ENCODE measurements at regions of chr1 and their contacts with region 1.

Region 1: GRCh38 chr1:63674238-63674864 is 81.1 kb downstream of the PGM1 start:
- DNase-seq: peak; percentile 83 to 89
- H3K4me3 ChIP-seq: no peak overlapping the region
- H3K4me3 Mint-ChIP-seq: no peak overlapping the region
- H3K27ac Mint-ChIP-seq: peak overlapping the region; percentile 19
- H3K4me1 ChIP-seq: peaks cover 9% of the 10 kb centered on the region
- H3K4me1 Mint-ChIP-seq: peaks cover 16% of the 10 kb centered on the region
- H3K27me3 ChIP-seq: no peaks in the 10 kb centered on the region
- H3K27me3 Mint-ChIP-seq: no peaks in the 10 kb centered on the region
- CTCF ChIP-seq: peak; percentile 38 to 56

Region 2: DNA sequence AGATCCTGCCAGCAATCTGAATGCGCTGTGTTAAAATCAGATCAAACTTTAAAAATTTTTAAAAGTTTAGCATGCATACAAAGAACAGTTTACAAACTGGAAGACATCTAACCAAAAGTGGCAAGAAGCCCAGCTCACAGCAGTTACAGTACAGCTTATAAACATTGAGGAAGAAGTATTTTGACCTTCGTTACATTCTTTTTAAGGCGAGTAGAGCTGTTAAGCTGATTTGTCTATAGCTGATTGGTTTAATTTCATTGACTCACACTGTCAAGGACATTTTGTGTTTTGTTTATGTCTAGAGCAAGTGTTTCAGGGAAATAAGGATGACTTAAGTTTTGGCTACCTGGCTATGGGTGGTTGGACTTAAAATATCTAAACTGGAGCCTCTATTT is 84.2 kb before region 1 on chr1:
- CTCF ChIA-PET with region 1: no interaction called
- POLR2A ChIA-PET with region 1: no interaction called
- intact Hi-C with region 1: no loop called
- DNase-seq: no peak
- H3K4me3 ChIP-seq: no peak overlapping the region
- H3K4me3 Mint-ChIP-seq: no peak overlapping the region
- H3K27ac Mint-ChIP-seq: no peak overlapping the region
- H3K4me1 ChIP-seq: peaks cover 16% of the 10 kb centered on the region
- H3K4me1 Mint-ChIP-seq: no peaks in the 10 kb centered on the region
- H3K27me3 ChIP-seq: no peaks in the 10 kb centered on the region
- H3K27me3 Mint-ChIP-seq: no peaks in the 10 kb centered on the region
- CTCF ChIP-seq: no peak

Region 3: GRCh38 chr1:63615768-63616420 is 58.5 kb before region 1 on chr1:
- CTCF ChIA-PET with region 1: no interaction called
- POLR2A ChIA-PET with region 1: no interaction called
- intact Hi-C with region 1: loop called (anchors 5 kb)
- DNase-seq: peak; percentile 40 to 74
- H3K4me3 ChIP-seq: no peak overlapping the region
- H3K4me3 Mint-ChIP-seq: no peak overlapping the region
- H3K27ac Mint-ChIP-seq: no peak overlapping the region
- H3K4me1 ChIP-seq: no peaks in the 10 kb centered on the region; the same call in 1 of the 2 replicates
- H3K4me1 Mint-ChIP-seq: peaks cover 11% of the 10 kb centered on the region
- H3K27me3 ChIP-seq: no peaks in the 10 kb centered on the region
- H3K27me3 Mint-ChIP-seq: no peaks in the 10 kb centered on the region
- CTCF ChIP-seq: peak; percentile 37 to 59

Region 4: DNA sequence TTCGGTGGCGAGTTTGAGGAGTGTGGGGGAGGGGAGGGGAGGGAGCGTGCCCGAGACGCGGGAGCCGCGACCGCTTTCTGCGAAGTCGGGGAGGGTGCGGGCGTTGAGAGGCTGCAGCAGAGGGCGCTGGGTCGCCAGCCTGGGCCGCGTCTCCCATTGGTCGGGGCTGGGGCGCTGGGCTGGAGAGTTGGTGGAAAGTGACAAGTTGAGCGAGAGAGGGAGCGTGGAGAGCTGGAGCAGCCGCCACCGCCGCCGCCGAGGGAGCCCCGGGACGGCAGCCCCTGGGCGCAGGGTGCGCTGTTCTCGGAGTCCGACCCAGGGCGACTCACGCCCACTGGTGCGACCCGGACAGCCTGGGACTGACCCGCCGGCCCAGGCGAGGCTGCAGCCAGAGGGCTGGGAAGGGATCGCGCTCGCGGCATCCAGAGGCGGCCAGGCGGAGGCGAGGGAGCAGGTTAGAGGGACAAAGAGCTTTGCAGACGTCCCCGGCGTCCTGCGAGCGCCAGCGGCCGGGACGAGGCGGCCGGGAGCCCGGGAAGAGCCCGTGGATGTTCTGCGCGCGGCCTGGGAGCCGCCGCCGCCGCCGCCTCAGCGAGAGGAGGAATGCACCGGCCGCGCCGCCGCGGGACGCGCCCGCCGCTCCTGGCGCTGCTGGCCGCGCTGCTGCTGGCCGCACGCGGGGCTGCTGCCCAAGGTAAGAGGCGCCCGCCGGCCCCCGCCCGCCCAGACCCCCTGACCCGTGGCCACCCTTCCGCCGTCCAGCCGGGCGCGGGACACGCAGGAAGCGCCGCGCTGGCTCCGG is 99.7 kb after region 1 on chr1 and contains the start of gene ROR1:
- CTCF ChIA-PET with region 1: interaction called, 7 read pairs
- POLR2A ChIA-PET with region 1: interaction called, 3 read pairs
- intact Hi-C with region 1: loop called (anchors 5 kb)
- DNase-seq: peak; percentile 87 to 90
- H3K4me3 ChIP-seq: peak within 1 kb of the TSS; percentile 84
- H3K4me3 Mint-ChIP-seq: peak within 1 kb of the TSS; percentile 97
- H3K27ac Mint-ChIP-seq: peak within 1 kb of the TSS; percentile 77
- H3K4me1 ChIP-seq: peaks cover 13% of the 10 kb centered on the region
- H3K4me1 Mint-ChIP-seq: peaks cover 12% of the 10 kb centered on the region
- H3K27me3 ChIP-seq: no peaks in the 10 kb centered on the region
- H3K27me3 Mint-ChIP-seq: no peaks in the 10 kb centered on the region
- CTCF ChIP-seq: peak; percentile 32 to 64
- total RNA-seq, gene ROR1: 37.2 TPM in 2 replicates

Region 5: DNA sequence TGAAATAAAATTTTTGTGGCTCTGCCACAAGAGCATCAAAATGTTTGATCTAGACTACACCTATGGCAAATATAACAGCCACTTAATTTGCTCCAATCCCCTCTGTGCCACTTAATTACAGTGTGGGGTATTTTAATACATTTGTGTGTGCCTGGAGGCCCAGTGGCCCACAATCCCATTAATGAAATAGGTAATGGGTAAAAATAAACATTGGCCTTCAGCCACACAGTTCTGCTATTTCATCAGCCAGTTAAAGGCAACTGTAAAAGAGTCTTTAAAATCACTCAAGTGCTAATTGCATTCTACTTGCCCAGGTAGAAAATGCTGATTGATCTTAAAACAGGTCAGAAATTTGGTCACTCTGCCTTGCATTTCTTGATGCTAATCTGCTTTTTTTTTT is 377.4 kb after region 1 on chr1:
- CTCF ChIA-PET with region 1: no interaction called
- POLR2A ChIA-PET with region 1: no interaction called
- intact Hi-C with region 1: loop called (anchors 10 kb)
- DNase-seq: no peak
- H3K4me3 ChIP-seq: no peak overlapping the region
- H3K4me3 Mint-ChIP-seq: no peak overlapping the region
- H3K27ac Mint-ChIP-seq: peak overlapping the region; percentile 53
- H3K4me1 ChIP-seq: peaks cover 24% of the 10 kb centered on the region
- H3K4me1 Mint-ChIP-seq: peaks cover 19% of the 10 kb centered on the region
- H3K27me3 ChIP-seq: no peaks in the 10 kb centered on the region
- H3K27me3 Mint-ChIP-seq: no peaks in the 10 kb centered on the region
- CTCF ChIP-seq: no peak

Region 6: GRCh38 chr1:64163970-64164369 is 489.6 kb after region 1 on chr1:
- CTCF ChIA-PET with region 1: interaction called, 4 read pairs
- POLR2A ChIA-PET with region 1: no interaction called
- intact Hi-C with region 1: loop called (anchors 1 kb)
- DNase-seq: no peak
- H3K4me3 ChIP-seq: no peak overlapping the region
- H3K4me3 Mint-ChIP-seq: no peak overlapping the region
- H3K27ac Mint-ChIP-seq: no peak overlapping the region
- H3K4me1 ChIP-seq: no peaks in the 10 kb centered on the region
- H3K4me1 Mint-ChIP-seq: peaks cover 7% of the 10 kb centered on the region
- H3K27me3 ChIP-seq: no peaks in the 10 kb centered on the region
- H3K27me3 Mint-ChIP-seq: no peaks in the 10 kb centered on the region
- CTCF ChIP-seq: peak in 1 of 2 experiments; percentile 27

Measured in Caco-2 (cell line).